ENCODE measurements at regions of chr1 and their contacts with region 1.

Region 1: GRCh38 chr1:20751462-20751990 is 19.0 kb upstream of the SH2D5 start:
- DNase-seq: no peak
- H3K4me3 ChIP-seq: no peak overlapping the region
- H3K27me3 ChIP-seq: no peaks in the 10 kb centered on the region
- CTCF ChIP-seq: no peak

Region 2: DNA sequence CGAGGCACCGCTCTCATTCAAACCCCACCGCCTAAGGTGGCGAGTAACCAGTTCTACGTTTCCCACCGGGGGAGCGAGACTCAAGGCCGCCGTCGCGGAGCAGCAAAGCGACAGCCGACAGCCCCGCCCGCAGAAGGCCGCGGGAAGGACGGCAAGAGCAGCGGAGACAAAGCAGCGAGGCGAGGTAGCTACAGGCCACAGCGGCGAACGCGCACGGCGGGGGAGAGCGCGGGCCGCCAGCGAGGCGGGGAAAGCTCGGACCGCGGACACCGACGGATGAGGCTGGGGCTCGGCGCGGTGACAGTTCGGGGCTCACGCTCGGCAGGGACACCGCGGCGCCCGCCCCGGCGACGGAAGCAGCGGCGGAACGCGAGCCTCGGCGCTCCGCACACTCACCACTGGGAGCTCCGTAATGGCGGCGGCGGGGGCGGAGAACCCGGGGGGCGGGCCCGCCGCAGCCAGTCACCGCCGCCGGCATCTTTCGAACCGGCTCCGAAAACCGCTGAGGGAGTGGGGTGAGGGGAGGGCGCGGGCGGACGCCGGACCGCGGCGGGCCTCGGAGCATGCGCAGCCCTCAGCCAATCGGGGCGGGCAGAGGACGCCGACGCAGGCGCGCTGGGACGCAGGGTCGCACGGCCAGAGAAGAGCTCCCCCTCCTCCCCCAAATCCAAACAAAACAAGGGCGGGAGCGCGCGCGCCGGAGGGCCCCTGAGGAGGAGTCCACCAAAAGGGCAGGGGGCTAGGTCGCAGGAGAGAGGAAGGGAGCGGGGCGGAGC is 34.9 kb after region 1 on chr1:
- CTCF ChIA-PET with region 1: no interaction called
- POLR2A ChIA-PET with region 1: interaction called, 17 read pairs
- DNase-seq: peak; percentile 57
- H3K4me3 ChIP-seq: peak overlapping the region; percentile 89
- H3K27me3 ChIP-seq: no peaks in the 10 kb centered on the region
- CTCF ChIP-seq: no peak